B cell (primary cell): ENCODE measurements at regions of chr1 and their contacts with region 1.

Region 1: DNA sequence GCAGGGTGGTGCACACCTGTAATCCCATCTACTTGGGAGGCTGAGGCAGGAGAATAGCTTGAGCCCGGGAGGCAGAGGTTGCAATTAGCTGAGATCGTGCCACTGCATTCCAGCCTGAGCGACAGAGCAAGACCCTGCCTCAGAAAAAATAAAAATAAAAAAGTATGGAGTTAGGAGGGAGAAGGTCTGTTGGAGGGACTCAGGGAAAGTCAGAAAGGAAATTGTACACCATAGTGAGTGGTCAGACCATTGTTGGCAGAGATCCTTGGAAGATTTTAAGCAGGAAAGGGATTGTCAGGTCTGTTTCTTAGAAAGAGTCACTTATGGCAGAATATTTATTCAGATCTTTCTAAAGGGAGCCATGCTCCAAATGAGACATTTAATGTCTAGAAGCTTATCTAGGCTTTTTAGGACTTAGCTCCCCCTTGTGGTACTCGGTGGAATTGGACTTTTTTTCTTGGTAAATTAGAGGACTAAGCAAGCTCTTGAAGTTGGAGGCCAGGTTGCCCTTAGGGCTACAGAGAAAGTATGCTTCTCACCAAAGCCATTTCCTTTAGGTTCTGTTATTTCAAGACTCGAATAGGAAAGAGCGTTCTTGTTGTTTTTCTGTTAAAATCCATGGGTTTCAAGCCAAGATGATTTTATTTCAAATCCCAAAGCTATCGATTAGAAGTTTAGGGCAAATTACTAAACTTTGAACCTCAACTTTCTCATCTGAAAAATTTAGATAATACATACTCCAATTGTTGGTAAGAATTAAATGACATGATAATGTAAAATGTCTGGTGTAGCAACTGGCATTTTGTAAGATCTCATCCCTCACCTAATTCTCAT is 16.5 kb downstream of the MIA3 start:
- DNase-seq: peak; percentile 89
- ATAC-seq: peak; percentile 86
- H3K4me3 ChIP-seq: no peak overlapping the region
- H3K4me3 Mint-ChIP-seq: no peak overlapping the region
- H3K27ac ChIP-seq: peak overlapping the region in 1 of 2 donors; percentile 42
- H3K27ac Mint-ChIP-seq: peak overlapping the region; percentile 61
- H3K4me1 ChIP-seq: peaks cover 12 to 15% of the 10 kb centered on the region in 2 donors
- H3K4me1 Mint-ChIP-seq: peaks cover 11% of the 10 kb centered on the region
- H3K27me3 ChIP-seq: no peaks in the 10 kb centered on the region
- H3K27me3 Mint-ChIP-seq: no peaks in the 10 kb centered on the region
- CTCF ChIP-seq: peak; percentile 93

Region 2: DNA sequence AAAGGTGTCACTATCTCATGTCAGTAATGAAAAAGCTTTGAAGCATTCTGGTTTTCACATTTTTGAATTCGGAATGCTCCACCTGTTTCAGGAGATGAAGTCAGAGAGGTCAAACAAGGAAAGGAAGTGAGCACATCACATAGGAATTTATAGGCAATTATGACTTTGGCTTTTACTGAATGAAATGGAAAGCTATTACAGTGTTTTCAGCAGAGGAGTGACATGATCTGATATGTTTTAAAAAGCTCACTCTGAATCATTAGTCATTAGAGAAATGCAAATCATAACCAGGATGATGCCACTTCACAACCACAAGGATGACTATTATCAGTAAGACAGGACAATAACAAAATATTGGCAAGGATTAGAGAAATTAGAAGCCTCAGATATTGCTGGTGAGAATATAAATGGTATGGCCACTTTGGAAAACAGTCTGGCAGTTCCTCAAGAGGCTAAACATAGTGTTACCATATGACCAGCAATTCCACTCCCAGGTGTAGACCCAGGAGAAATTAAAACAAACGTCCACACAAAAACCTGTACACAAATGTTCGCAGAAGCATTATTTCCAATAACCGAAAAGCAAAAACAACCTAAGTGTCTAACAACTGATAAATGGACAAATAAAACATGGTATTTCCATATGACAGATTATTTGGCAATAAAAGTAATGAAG is 52.2 kb before region 1 on chr1:
- CTCF ChIA-PET with region 1: interaction called, 11 read pairs
- POLR2A ChIA-PET with region 1: no interaction called
- intact Hi-C with region 1: no loop called
- DNase-seq: no peak
- ATAC-seq: no peak
- H3K4me3 ChIP-seq: peak overlapping the region in 1 of 5 experiments; percentile 38
- H3K4me3 Mint-ChIP-seq: peak overlapping the region; percentile 83
- H3K27ac ChIP-seq: peak overlapping the region; percentile 54 to 64
- H3K27ac Mint-ChIP-seq: peak overlapping the region; percentile 91
- H3K4me1 ChIP-seq: peaks cover 43 to 50% of the 10 kb centered on the region in 2 donors
- H3K4me1 Mint-ChIP-seq: peaks cover 69% of the 10 kb centered on the region
- H3K27me3 ChIP-seq: no peaks in the 10 kb centered on the region
- H3K27me3 Mint-ChIP-seq: no peaks in the 10 kb centered on the region
- CTCF ChIP-seq: no peak

Region 3: GRCh38 chr1:222617367-222617951 is 16.9 kb before region 1 on chr1:
- CTCF ChIA-PET with region 1: interaction called, 30 read pairs
- POLR2A ChIA-PET with region 1: interaction called, 7 read pairs
- intact Hi-C with region 1: loop called (anchors 2 kb)
- DNase-seq: peak; percentile 95
- ATAC-seq: peak; percentile 90
- H3K4me3 ChIP-seq: peak overlapping the region; percentile 6 to 91 (median 67)
- H3K4me3 Mint-ChIP-seq: peak overlapping the region; percentile 96
- H3K27ac ChIP-seq: peak overlapping the region; percentile 71 to 82
- H3K27ac Mint-ChIP-seq: peak overlapping the region; percentile 95
- H3K4me1 ChIP-seq: peaks cover 17 to 18% of the 10 kb centered on the region in 2 donors
- H3K4me1 Mint-ChIP-seq: peaks cover 29% of the 10 kb centered on the region
- H3K27me3 ChIP-seq: peaks cover 0 to 15% (median 6%) of the 10 kb centered on the region in 4 experiments
- H3K27me3 Mint-ChIP-seq: peaks cover 19% of the 10 kb centered on the region
- CTCF ChIP-seq: no peak

Region 4: DNA sequence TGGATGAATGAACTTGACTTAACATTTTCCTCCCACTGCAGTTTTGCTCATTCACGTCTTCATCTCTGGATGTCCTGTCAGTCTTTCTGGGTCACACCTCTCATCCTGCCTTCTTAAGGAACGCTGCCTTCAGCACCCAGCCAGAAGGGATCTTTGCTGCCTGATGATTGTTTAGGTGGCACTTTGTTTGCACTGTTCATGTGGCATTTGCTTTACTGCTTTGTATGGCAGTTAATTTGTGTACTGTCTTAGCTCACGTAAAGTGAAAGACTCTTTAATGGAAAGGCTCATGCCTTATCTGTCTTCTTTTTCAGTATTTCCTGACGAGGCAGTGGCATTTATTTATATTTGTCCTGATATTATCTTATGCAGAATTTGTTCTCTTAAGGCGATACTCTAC is 11.6 kb before region 1 on chr1:
- CTCF ChIA-PET with region 1: interaction called, 30 read pairs
- POLR2A ChIA-PET with region 1: interaction called, 7 read pairs
- intact Hi-C with region 1: loop called (anchors 2 kb)
- DNase-seq: no peak
- ATAC-seq: no peak
- H3K4me3 ChIP-seq: no peak overlapping the region
- H3K4me3 Mint-ChIP-seq: no peak overlapping the region
- H3K27ac ChIP-seq: no peak overlapping the region
- H3K27ac Mint-ChIP-seq: no peak overlapping the region
- H3K4me1 ChIP-seq: peaks cover 11 to 12% of the 10 kb centered on the region in 2 donors
- H3K4me1 Mint-ChIP-seq: peaks cover 21% of the 10 kb centered on the region
- H3K27me3 ChIP-seq: no peaks in the 10 kb centered on the region
- H3K27me3 Mint-ChIP-seq: no peaks in the 10 kb centered on the region
- CTCF ChIP-seq: no peak